CD4-positive, alpha-beta memory T cell (primary cell): ENCODE measurements at regions of chr17 and their contacts with region 1.

Region 1: DNA sequence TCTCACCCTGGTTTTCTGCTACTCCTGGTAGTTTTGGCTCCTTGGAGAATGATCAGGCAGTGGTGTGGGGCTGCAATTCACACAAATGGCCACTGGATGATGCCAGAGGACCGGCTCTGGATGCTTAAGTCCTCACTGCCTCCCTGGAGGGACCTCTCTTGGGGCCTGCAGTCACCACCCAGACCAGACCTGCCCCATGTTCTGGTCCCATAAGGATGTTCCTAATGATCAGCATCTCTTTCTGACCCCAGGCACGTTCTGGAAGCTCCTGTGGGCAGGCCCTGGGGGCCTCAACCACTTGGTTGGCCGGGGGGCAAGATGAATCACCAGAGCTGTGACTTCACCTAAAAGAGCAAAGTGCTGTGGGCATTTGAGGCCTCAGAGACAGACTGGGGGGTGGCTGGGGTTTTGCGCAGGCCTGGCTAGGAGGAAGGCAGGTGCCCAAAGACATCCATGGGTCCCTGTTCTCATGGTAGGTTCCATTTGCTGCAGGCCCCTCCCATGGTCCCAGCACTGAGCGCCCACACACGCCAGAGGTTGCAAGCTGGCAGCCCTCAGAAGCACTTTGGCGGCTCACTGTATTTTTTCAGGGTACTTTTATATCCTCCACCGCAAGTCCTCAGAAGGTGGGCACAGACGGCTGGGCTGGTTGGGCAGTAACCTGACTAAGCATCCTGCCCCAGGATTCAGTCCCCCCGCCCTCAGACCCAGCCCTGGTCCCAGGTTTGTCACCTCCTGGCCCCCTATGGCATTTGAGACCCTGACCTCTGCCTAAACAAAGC is 53.2 kb downstream of the NT5M start:
- DNase-seq: peak; percentile 59 to 65 (median 64)
- H3K4me3 ChIP-seq: no peak overlapping the region
- H3K4me3 Mint-ChIP-seq: no peak overlapping the region
- H3K27ac ChIP-seq: no peak overlapping the region
- H3K27ac Mint-ChIP-seq: peak overlapping the region in 1 of 7 donors; percentile 46
- H3K4me1 ChIP-seq: no peaks in the 10 kb centered on the region
- H3K4me1 Mint-ChIP-seq: peaks cover 0 to 7% (median 1%) of the 10 kb centered on the region in 4 donors
- H3K27me3 ChIP-seq: no peaks in the 10 kb centered on the region
- H3K27me3 Mint-ChIP-seq: peaks cover 1 to 4% of the 10 kb centered on the region in 2 donors

Region 2: GRCh38 chr17:17305281-17305801 is 51.0 kb before region 1 on chr17:
- CTCF ChIA-PET with region 1: no interaction called
- POLR2A ChIA-PET with region 1: no interaction called
- intact Hi-C with region 1: no loop called
- DNase-seq: peak; percentile 36 to 63 (median 52)
- H3K4me3 ChIP-seq: no peak overlapping the region
- H3K4me3 Mint-ChIP-seq: peak overlapping the region; percentile 73 to 92 (median 86)
- H3K27ac ChIP-seq: no peak overlapping the region
- H3K27ac Mint-ChIP-seq: peak overlapping the region; percentile 76 to 95 (median 94)
- H3K4me1 ChIP-seq: peaks cover 42% of the 10 kb centered on the region
- H3K4me1 Mint-ChIP-seq: peaks cover 22 to 36% (median 32%) of the 10 kb centered on the region in 4 donors
- H3K27me3 ChIP-seq: no peaks in the 10 kb centered on the region
- H3K27me3 Mint-ChIP-seq: no peaks in the 10 kb centered on the region

Region 3: GRCh38 chr17:17391668-17392370 is 35.5 kb after region 1 on chr17:
- CTCF ChIA-PET with region 1: interaction called, 12 read pairs
- POLR2A ChIA-PET with region 1: no interaction called
- intact Hi-C with region 1: no loop called
- DNase-seq: peak; percentile 76 to 81 (median 79)
- H3K4me3 ChIP-seq: peak overlapping the region; percentile 49 to 53
- H3K4me3 Mint-ChIP-seq: peak overlapping the region; percentile 85 to 94 (median 90)
- H3K27ac ChIP-seq: peak overlapping the region; percentile 28
- H3K27ac Mint-ChIP-seq: peak overlapping the region; percentile 77 to 96 (median 87)
- H3K4me1 ChIP-seq: peaks cover 21% of the 10 kb centered on the region
- H3K4me1 Mint-ChIP-seq: peaks cover 12 to 25% (median 18%) of the 10 kb centered on the region in 4 donors
- H3K27me3 ChIP-seq: no peaks in the 10 kb centered on the region
- H3K27me3 Mint-ChIP-seq: peaks cover 2% of the 10 kb centered on the region in 2 donors

Region 4: GRCh38 chr17:17403899-17404576 is 47.7 kb after region 1 on chr17:
- CTCF ChIA-PET with region 1: no interaction called
- POLR2A ChIA-PET with region 1: no interaction called
- intact Hi-C with region 1: no loop called
- DNase-seq: peak; percentile 50 to 60 (median 51)
- H3K4me3 ChIP-seq: peak overlapping the region; percentile 17 to 44
- H3K4me3 Mint-ChIP-seq: peak overlapping the region; percentile 54 to 85 (median 80)
- H3K27ac ChIP-seq: peak overlapping the region; percentile 14
- H3K27ac Mint-ChIP-seq: peak overlapping the region; percentile 82 to 97 (median 91)
- H3K4me1 ChIP-seq: peaks cover 43% of the 10 kb centered on the region
- H3K4me1 Mint-ChIP-seq: peaks cover 40 to 84% (median 59%) of the 10 kb centered on the region in 4 donors
- H3K27me3 ChIP-seq: no peaks in the 10 kb centered on the region
- H3K27me3 Mint-ChIP-seq: no peaks in the 10 kb centered on the region

Region 5: DNA sequence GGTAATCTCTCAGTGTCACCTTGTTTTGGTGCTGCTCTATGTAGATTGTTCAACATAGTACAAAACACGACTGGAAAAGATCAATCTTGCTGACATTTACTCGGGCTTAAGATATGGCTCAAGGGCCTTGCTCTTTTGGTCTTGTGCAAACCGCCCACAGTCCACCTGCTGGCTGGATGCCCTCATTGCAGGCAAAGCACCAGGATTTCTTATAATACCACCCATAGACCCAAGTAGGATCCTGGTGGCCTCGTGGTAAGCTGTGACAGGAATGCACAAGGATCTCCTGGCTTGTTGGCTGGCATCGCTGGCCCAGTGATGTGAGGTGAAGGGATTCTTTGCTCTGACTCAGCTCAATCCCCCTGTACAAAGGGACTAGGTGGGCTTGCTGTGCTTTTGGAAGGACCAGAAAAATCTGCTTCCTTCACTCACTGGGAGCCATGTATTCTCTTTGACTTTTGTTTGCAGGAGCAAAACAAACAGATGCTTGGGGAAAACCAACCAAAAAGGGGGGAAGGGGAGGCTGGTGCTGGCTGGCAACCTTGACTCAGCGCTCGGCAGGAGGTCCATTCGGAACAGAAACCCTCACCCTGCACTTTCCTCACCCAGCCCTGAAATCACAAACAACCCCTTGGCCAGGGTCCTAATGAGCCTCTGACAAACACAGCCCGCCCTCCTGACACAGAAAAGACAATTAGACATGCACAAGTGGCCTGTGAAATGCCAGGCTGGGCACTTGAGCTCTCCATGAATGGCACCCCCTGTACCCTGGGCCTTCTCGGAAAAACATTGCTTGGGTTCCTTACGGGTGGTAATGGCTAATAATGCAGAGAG is 83.9 kb after region 1 on chr17:
- CTCF ChIA-PET with region 1: interaction called, 27 read pairs
- POLR2A ChIA-PET with region 1: no interaction called
- intact Hi-C with region 1: no loop called
- DNase-seq: peak; percentile 65 to 71 (median 70)
- H3K4me3 ChIP-seq: no peak overlapping the region
- H3K4me3 Mint-ChIP-seq: no peak overlapping the region
- H3K27ac ChIP-seq: no peak overlapping the region
- H3K27ac Mint-ChIP-seq: peak overlapping the region in 2 of 7 donors; percentile 19 to 53
- H3K4me1 ChIP-seq: peaks cover 7% of the 10 kb centered on the region
- H3K4me1 Mint-ChIP-seq: peaks cover 0 to 5% (median 2%) of the 10 kb centered on the region in 4 donors
- H3K27me3 ChIP-seq: no peaks in the 10 kb centered on the region
- H3K27me3 Mint-ChIP-seq: peaks cover 0 to 4% of the 10 kb centered on the region in 2 donors

Region 6: GRCh38 chr17:17445925-17446665 is 89.8 kb after region 1 on chr17:
- CTCF ChIA-PET with region 1: interaction called, 27 read pairs
- POLR2A ChIA-PET with region 1: no interaction called
- intact Hi-C with region 1: no loop called
- DNase-seq: no peak
- H3K4me3 ChIP-seq: no peak overlapping the region
- H3K4me3 Mint-ChIP-seq: no peak overlapping the region
- H3K27ac ChIP-seq: no peak overlapping the region
- H3K27ac Mint-ChIP-seq: no peak overlapping the region
- H3K4me1 ChIP-seq: no peaks in the 10 kb centered on the region
- H3K4me1 Mint-ChIP-seq: no peaks in the 10 kb centered on the region
- H3K27me3 ChIP-seq: no peaks in the 10 kb centered on the region
- H3K27me3 Mint-ChIP-seq: peaks cover 0 to 5% of the 10 kb centered on the region in 2 donors

Region 7: DNA sequence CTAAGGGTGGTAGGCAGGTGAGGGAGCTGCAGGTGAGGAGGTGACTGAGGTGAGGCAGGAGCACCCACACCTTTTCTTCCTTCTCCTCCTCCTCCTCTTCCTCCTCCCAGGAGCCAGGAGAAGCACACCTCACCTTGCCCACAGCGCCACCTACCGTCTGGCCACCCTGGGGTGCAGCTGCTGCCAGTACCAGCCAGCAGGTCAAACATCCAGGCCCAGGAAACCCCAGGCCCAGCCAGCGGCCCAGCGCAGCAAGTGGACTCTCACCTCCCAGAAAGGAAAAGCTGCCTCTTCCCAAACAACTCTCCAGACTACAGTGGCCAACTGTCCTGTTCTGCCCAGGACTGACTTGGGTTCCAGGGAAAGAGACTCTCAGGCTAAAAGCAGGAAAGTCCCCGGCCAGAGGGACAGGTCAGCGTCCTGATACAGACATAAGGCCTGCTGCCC is 212.4 kb after region 1 on chr17:
- CTCF ChIA-PET with region 1: interaction called, 4 read pairs
- POLR2A ChIA-PET with region 1: no interaction called
- intact Hi-C with region 1: loop called (anchors 1 kb)
- DNase-seq: peak in 4 of 5 donors; percentile 19 to 41 (median 27)
- H3K4me3 ChIP-seq: no peak overlapping the region
- H3K4me3 Mint-ChIP-seq: no peak overlapping the region
- H3K27ac ChIP-seq: no peak overlapping the region
- H3K27ac Mint-ChIP-seq: no peak overlapping the region
- H3K4me1 ChIP-seq: no peaks in the 10 kb centered on the region
- H3K4me1 Mint-ChIP-seq: peaks cover 0 to 5% (median 1%) of the 10 kb centered on the region in 4 donors
- H3K27me3 ChIP-seq: no peaks in the 10 kb centered on the region
- H3K27me3 Mint-ChIP-seq: no peaks in the 10 kb centered on the region

Region 8: DNA sequence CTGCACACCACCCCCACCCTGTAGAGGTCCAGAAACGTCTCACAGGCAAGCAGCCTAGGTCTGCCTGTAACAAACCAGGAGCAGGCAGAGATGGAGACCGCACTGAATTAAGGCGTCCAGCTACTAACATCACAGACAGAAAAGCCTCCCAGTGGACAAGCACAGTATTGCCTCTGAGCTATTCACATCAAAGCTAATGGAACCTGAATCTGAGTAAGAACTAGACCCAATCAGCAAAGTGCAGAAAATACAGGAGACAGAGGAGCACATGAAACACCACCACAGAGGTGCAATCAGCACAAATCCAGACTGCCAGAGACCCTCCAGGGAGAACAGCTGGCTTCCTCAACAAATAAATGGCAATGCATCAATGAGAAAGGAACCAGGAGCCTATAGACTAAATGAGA is 257.4 kb after region 1 on chr17:
- CTCF ChIA-PET with region 1: interaction called, 13 read pairs
- POLR2A ChIA-PET with region 1: no interaction called
- intact Hi-C with region 1: no loop called
- DNase-seq: peak; percentile 20 to 52 (median 42)
- H3K4me3 ChIP-seq: no peak overlapping the region
- H3K4me3 Mint-ChIP-seq: peak overlapping the region in 1 of 8 donors; percentile 39
- H3K27ac ChIP-seq: no peak overlapping the region
- H3K27ac Mint-ChIP-seq: no peak overlapping the region
- H3K4me1 ChIP-seq: no peaks in the 10 kb centered on the region
- H3K4me1 Mint-ChIP-seq: peaks cover 0 to 6% (median 3%) of the 10 kb centered on the region in 4 donors
- H3K27me3 ChIP-seq: no peaks in the 10 kb centered on the region
- H3K27me3 Mint-ChIP-seq: no peaks in the 10 kb centered on the region

Region 9: DNA sequence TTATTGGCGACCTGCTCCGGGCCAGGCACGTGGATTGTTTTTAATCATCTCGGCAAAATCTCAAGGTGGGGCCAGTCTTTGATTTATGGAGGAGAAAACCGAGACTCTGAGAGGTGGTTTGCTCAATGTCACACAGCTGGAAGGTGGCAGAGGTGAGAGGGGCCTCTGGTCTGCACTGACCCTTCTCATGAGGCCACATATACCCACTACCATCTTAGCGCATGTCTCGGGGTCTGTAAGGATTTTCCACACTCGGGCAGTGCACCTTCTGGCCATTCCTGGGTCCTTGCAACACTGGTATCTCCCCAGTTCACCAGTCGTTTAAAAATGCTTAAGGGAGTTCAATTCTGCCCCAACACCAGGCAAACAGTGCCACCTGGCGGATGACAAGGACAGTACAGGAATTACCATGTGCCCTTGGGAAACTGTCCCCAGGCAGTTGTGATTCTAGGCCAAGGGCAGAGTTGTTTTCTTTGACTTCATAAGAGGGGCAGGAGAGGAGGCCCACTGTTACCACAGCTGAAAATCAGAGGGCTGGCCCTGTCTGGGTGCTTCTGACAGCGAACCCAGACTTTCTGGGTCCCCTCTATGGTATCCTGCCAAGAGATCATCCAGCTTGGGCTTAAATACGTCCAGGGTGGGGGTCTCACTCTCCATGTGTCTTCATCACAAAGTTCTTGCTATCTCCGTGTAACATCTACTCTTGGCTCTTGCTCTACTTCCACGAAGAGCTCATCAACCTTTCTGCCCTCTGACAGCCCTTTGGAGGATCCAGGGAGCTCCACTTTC is 285.5 kb after region 1 on chr17:
- CTCF ChIA-PET with region 1: interaction called, 82 read pairs
- POLR2A ChIA-PET with region 1: interaction called, 6 read pairs
- intact Hi-C with region 1: loop called (anchors 1 kb)
- DNase-seq: peak; percentile 67 to 74 (median 72)
- H3K4me3 ChIP-seq: no peak overlapping the region
- H3K4me3 Mint-ChIP-seq: no peak overlapping the region
- H3K27ac ChIP-seq: no peak overlapping the region
- H3K27ac Mint-ChIP-seq: peak overlapping the region in 1 of 7 donors; percentile 27
- H3K4me1 ChIP-seq: no peaks in the 10 kb centered on the region
- H3K4me1 Mint-ChIP-seq: no peaks in the 10 kb centered on the region
- H3K27me3 ChIP-seq: no peaks in the 10 kb centered on the region
- H3K27me3 Mint-ChIP-seq: peaks cover 6% of the 10 kb centered on the region in 2 donors